Mammary epithelial cell (primary cell): ENCODE measurements at regions of chr9 and their contacts with region 1.

Region 1: GRCh38 chr9:130665431-130666392 is 1.3 kb downstream of the PRDM12 start:
- DNase-seq: no peak
- H3K4me3 ChIP-seq: no peak overlapping the region
- H3K27ac ChIP-seq: no peak overlapping the region
- H3K4me1 ChIP-seq: peaks cover 8% of the 10 kb centered on the region
- H3K27me3 ChIP-seq: peaks cover 62% of the 10 kb centered on the region
- CTCF ChIP-seq: no peak

Region 2: GRCh38 chr9:130599625-130600024 is 66.1 kb before region 1 on chr9:
- CTCF ChIA-PET with region 1: no interaction called
- dilution Hi-C with region 1: loop called (anchors 5 kb)
- in situ Hi-C with region 1: no loop called
- intact Hi-C with region 1: no loop called
- DNase-seq: no peak
- H3K4me3 ChIP-seq: no peak overlapping the region
- H3K27ac ChIP-seq: no peak overlapping the region
- H3K4me1 ChIP-seq: no peaks in the 10 kb centered on the region
- H3K27me3 ChIP-seq: no peaks in the 10 kb centered on the region
- CTCF ChIP-seq: no peak